Aorta (tissue), 5 donors: ENCODE measurements at regions of chr6 and their contacts with region 1.

Region 1: DNA sequence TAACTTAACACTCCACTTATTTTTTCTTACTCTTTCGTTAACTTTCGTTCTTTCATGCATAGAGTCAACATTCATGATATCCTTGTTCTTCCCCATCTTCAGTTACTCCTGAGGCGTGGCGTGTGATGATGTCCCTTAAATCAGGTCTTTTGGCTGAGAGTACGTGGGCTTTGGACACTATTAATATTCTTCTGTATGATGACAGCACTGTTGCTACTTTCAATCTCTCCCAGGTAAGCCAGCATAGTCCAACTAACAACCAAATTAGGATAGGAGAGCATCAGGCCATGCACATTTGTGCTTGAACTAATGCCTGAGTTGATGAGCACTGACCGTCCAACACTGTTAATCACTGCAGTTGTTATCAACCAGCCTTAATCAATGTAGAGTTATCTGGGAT is 119.6 kb downstream of the TMEM242 start:
- DNase-seq: no peak
- ATAC-seq: no peak
- H3K4me3 ChIP-seq: no peak overlapping the region
- H3K27ac ChIP-seq: no peak overlapping the region
- H3K4me1 ChIP-seq: no peaks in the 10 kb centered on the region
- H3K27me3 ChIP-seq: no peaks in the 10 kb centered on the region

Region 2: DNA sequence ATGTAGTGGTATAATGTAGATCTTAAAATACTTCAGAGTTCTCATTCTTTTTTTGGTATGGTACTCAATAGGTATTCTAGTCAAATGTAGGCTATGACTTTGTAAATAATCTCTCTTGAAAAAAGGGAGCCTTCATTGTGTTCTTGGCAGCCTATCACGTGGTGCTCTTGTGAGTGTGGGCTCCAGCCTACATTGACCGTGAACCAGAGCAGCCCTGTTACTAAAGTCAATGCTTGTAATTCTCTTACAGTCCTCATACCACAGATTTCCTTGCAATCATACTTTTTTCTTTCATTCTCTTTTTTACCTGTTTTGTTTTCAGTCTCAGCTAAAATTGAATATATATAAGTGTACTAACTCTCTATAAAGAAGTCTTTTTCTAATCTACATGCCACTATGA is 395.5 kb before region 1 on chr6:
- intact Hi-C with region 1: no loop called
- DNase-seq: no peak
- ATAC-seq: peak; percentile 71
- H3K4me3 ChIP-seq: no peak overlapping the region
- H3K27ac ChIP-seq: no peak overlapping the region
- H3K4me1 ChIP-seq: peaks cover 0 to 5% of the 10 kb centered on the region in 2 donors
- H3K27me3 ChIP-seq: no peaks in the 10 kb centered on the region

Region 3: DNA sequence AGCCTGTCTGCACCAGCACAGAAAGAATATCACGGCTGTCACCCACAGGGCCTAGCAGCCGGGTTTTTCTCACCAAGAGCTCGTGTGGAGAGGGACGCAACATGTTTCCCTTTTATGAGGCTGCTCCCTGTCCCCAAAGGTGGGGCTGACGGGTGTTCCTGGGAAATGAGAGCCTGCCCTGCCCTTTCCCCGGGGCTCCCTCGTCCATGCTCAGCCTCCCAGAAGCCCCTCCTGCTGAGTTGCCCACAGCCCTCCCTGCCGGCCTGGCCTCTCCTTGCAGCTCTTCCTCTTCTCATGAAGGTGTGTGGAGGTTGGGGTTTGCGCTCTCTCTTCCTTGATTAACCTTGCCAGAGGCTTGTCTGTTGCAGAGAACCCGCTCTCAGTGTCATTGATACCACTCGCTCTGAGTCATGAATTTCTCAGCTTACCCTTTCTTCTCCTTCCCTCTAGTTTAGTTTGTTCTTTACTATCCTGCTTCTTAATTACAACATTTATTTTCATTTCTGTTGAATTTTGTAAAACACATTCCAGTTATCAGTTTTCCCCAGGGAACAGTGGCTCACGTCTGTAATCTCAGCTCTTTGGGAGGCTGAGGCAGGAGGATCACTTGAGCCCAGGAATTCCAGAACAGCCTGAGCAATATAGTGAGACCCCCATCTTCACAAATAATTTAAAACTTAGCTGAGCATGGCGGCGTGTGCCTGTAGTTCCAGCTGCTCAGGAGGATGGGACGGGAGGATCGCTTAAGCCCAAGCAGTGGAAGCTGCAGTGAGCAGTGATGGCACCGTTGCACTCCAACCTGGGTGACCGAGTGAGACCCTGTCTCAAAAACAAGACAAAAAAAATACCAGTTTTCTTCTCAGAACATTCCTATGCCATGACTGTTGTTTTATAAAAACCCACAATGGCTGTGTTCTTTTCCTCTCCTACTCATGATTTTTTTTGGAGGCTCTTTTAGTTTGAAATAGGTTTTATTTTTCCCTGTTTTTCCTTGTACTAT is 15.7 kb after region 1 on chr6:
- intact Hi-C with region 1: loop called in 1 of 2 experiments (anchors 2 kb)
- DNase-seq: peak in 1 of 2 donors; percentile 76
- ATAC-seq: no peak
- H3K4me3 ChIP-seq: no peak overlapping the region
- H3K27ac ChIP-seq: peak overlapping the region; percentile 39 to 82
- H3K4me1 ChIP-seq: no peaks in the 10 kb centered on the region
- H3K27me3 ChIP-seq: no peaks in the 10 kb centered on the region